Activated B cell treated with CpG ODN at 0.5 μM for 24 hours (primary cell): ENCODE measurements at regions of chr11 and their contacts with region 1.

Region 1: DNA sequence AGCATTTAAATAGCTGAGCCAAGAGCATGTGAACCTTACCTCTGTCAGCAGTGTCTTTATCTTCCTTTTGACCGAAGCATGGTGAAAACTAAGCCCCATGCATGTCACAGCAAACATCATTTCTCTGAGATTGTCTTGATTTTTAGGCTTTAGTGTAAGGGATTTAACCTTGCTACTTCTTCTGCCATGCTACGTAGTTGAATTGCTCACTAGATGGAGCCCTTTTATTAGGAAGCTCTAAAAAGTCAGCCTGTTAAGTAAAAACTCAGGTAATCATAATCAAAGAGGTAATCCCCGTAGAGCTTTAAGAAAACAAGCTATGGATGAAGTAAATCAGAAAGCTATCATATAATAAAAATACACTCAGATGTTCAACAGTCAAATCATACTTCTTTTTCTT is 149.5 kb downstream of the PGR start:
- DNase-seq: no peak
- ATAC-seq: no peak
- H3K4me3 Mint-ChIP-seq: no peak overlapping the region
- H3K27ac Mint-ChIP-seq: no peak overlapping the region
- H3K4me1 Mint-ChIP-seq: peaks cover 7% of the 10 kb centered on the region
- H3K27me3 Mint-ChIP-seq: no peaks in the 10 kb centered on the region
- CTCF ChIP-seq: no peak

Region 2: GRCh38 chr11:99973993-99974392 is 1006.2 kb before region 1 on chr11:
- CTCF ChIA-PET with region 1: no interaction called
- POLR2A ChIA-PET with region 1: no interaction called
- intact Hi-C with region 1: no loop called
- DNase-seq: no peak
- ATAC-seq: no peak
- H3K4me3 Mint-ChIP-seq: no peak overlapping the region
- H3K27ac Mint-ChIP-seq: no peak overlapping the region
- H3K4me1 Mint-ChIP-seq: no peaks in the 10 kb centered on the region
- H3K27me3 Mint-ChIP-seq: no peaks in the 10 kb centered on the region
- CTCF ChIP-seq: no peak

Region 3: DNA sequence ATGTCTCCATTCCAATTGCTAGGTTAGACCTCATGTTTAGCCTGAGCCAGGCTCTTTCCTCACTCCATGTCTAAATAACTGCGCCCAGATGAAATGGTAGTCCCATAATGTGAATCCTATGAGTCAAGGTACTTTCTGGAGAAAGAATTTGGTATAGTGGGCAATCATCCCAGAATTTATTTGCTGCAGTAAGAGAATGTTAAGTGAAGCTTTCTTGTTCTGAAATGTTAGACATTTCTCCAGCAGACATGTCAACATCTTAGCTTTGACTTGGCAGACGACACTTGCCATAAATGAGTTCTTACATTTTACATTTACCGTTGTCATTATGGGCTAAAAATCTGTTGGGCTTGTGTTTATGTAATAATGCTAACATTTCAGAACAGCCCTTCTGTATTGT is 15.7 kb before region 1 on chr11:
- CTCF ChIA-PET with region 1: no interaction called
- POLR2A ChIA-PET with region 1: no interaction called
- intact Hi-C with region 1: no loop called
- DNase-seq: no peak
- ATAC-seq: no peak
- H3K4me3 Mint-ChIP-seq: no peak overlapping the region
- H3K27ac Mint-ChIP-seq: no peak overlapping the region
- H3K4me1 Mint-ChIP-seq: no peaks in the 10 kb centered on the region
- H3K27me3 Mint-ChIP-seq: no peaks in the 10 kb centered on the region
- CTCF ChIP-seq: no peak

Region 4: GRCh38 chr11:101436511-101437142 is 456.5 kb after region 1 on chr11:
- CTCF ChIA-PET with region 1: no interaction called
- POLR2A ChIA-PET with region 1: no interaction called
- intact Hi-C with region 1: loop called (anchors 2 kb)
- DNase-seq: no peak
- ATAC-seq: no peak
- H3K4me3 Mint-ChIP-seq: no peak overlapping the region
- H3K27ac Mint-ChIP-seq: no peak overlapping the region
- H3K4me1 Mint-ChIP-seq: no peaks in the 10 kb centered on the region
- H3K27me3 Mint-ChIP-seq: peaks cover 2% of the 10 kb centered on the region
- CTCF ChIP-seq: no peak